Activated CD4-positive, alpha-beta memory T cell treated with anti-CD3 and anti-CD28 coated beads, Interleukin-2, amount 10 ng/mL, durations not matched to agents 7 days and 5 days (primary cell): ENCODE measurements at regions of chr9 and their contacts with region 1.

Region 1: GRCh38 chr9:136902259-136902821 is 16.0 kb downstream of the TRAF2 start:
- DNase-seq: peak; percentile 86
- H3K4me3 Mint-ChIP-seq: peak overlapping the region; percentile 52
- H3K27ac Mint-ChIP-seq: peak overlapping the region; percentile 92
- H3K4me1 Mint-ChIP-seq: peaks cover 48% of the 10 kb centered on the region
- H3K27me3 Mint-ChIP-seq: no peaks in the 10 kb centered on the region

Region 2: GRCh38 chr9:136679431-136679941 is 222.9 kb before region 1 on chr9:
- CTCF ChIA-PET with region 1: no interaction called
- POLR2A ChIA-PET with region 1: no interaction called
- DNase-seq: no peak
- H3K4me3 Mint-ChIP-seq: no peak overlapping the region
- H3K27ac Mint-ChIP-seq: no peak overlapping the region
- H3K4me1 Mint-ChIP-seq: no peaks in the 10 kb centered on the region
- H3K27me3 Mint-ChIP-seq: no peaks in the 10 kb centered on the region

Region 3: GRCh38 chr9:136825295-136826187 is 76.8 kb before region 1 on chr9:
- CTCF ChIA-PET with region 1: no interaction called
- POLR2A ChIA-PET with region 1: no interaction called
- DNase-seq: no peak
- H3K4me3 Mint-ChIP-seq: no peak overlapping the region
- H3K27ac Mint-ChIP-seq: no peak overlapping the region
- H3K4me1 Mint-ChIP-seq: peaks cover 4% of the 10 kb centered on the region
- H3K27me3 Mint-ChIP-seq: no peaks in the 10 kb centered on the region

Region 4: DNA sequence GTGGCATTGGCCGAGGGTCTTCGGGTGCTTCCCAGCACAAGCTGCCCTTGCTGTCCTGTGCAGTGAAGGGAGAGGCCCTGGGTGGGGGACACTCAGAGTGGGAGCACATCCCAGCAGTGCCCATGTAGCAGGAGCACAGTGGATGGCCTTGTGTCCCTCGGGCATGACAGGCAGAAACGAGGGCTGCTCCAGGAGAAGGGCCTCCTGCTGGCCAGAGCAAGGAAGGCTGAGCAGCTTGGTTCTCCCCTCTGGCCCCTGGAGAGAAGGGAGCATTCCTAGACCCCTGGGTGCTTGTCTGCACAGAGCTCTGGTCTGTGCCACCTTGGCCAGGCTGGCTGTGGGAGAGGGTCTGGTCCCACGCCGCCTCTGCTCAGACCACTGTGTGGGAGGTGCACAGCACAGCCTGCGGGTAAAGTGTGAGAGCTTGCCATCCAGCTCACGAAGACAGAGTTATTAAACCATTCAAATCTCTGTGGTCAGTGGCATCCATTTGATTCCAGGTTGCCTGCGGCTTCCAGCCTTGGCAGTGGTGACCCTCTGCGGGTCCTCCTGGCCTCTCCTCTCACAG is 23.9 kb after region 1 on chr9:
- CTCF ChIA-PET with region 1: no interaction called
- POLR2A ChIA-PET with region 1: no interaction called
- DNase-seq: no peak
- H3K4me3 Mint-ChIP-seq: no peak overlapping the region
- H3K27ac Mint-ChIP-seq: no peak overlapping the region
- H3K4me1 Mint-ChIP-seq: peaks cover 7% of the 10 kb centered on the region
- H3K27me3 Mint-ChIP-seq: no peaks in the 10 kb centered on the region

Region 5: GRCh38 chr9:136944519-136945279 is 42.4 kb after region 1 on chr9 and contains the starts of genes C8G and FBXW5:
- CTCF ChIA-PET with region 1: no interaction called
- POLR2A ChIA-PET with region 1: interaction called, 11 read pairs
- DNase-seq: peak; percentile 96
- H3K4me3 Mint-ChIP-seq: peak within 1 kb of the TSS; percentile 80
- H3K27ac Mint-ChIP-seq: peak within 1 kb of the TSS; percentile 77
- H3K4me1 Mint-ChIP-seq: peaks cover 25% of the 10 kb centered on the region
- H3K27me3 Mint-ChIP-seq: no peaks in the 10 kb centered on the region
- total RNA-seq, gene C8G: 1.5 to 3.2 TPM
- total RNA-seq, gene FBXW5: 118 to 119 TPM

Region 6: DNA sequence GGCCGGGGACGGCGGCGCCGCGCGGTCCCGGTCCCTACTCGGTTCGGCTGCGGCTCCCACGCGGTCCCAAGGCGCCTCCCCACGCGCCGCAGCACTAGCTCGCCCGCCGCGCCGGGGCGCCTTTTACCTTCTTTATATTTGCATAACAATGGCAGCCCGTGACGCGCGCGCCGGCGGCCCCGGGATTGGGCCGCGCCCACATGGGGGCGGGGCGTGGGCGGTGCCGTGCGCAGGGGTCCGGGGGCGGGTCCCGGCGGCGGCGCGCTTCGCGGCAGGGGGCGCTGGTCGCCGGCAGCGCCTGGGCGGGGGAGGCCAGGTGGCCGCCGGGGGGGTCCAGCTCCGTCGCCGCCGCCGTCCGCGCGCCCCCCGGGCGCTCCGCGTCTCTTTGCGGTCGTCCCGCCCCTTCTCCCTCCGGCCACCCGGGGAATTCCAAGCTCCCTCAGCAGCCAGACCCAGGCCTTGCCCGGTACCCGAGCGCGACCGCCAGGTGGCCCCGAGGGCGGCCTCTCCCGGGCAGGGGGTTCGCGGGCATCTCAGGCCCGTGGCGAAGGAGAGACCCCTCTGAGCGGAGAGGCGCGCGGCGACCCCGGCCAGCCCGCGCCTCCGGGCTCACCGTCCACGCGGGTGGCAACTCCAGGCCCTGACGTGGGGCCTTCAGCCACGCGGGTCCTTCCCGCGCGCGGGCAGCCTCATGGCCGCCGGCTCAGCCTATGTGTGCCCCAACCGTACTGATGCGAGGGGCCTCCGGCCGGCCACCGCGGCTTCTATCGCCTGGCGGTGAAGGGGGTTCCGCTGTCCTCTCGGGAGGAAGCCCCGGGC is 400.0 kb after region 1 on chr9 and contains the start of gene NRARP:
- CTCF ChIA-PET with region 1: no interaction called
- POLR2A ChIA-PET with region 1: no interaction called
- DNase-seq: peak; percentile 90
- H3K4me3 Mint-ChIP-seq: peak within 1 kb of the TSS; percentile 48
- H3K27ac Mint-ChIP-seq: no peak within 1 kb of the TSS
- H3K4me1 Mint-ChIP-seq: peaks cover 19% of the 10 kb centered on the region
- H3K27me3 Mint-ChIP-seq: peaks cover 29% of the 10 kb centered on the region
- total RNA-seq, gene NRARP: 0.71 to 0.75 TPM